ENCODE measurements at regions of chr10 and their contacts with region 1.

Region 1: DNA sequence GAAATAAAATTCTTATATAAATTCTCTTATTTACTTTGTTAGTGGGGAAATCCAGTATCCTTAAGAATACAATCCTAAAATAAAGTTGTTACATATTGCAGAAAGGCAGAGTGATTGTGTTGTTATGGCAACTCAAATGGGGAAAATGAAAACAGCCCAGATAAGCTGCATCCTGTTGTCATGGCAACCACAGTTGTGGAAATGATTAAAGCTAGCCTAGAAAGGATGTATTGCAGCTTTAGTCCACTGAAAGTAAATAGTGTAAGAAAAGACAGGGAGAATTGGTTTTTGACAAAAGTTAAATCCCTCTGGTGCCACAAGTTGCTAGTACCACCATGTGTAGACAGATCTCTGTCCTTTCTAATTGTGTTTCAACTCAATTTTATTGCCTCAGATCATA is 43.2 kb downstream of the BTRC start:
- DNase-seq: no peak
- H3K4me3 ChIP-seq: no peak overlapping the region
- H3K27ac ChIP-seq: no peak overlapping the region
- H3K4me1 ChIP-seq: no peaks in the 10 kb centered on the region
- H3K27me3 ChIP-seq: no peaks in the 10 kb centered on the region
- CTCF ChIP-seq: no peak

Region 2: DNA sequence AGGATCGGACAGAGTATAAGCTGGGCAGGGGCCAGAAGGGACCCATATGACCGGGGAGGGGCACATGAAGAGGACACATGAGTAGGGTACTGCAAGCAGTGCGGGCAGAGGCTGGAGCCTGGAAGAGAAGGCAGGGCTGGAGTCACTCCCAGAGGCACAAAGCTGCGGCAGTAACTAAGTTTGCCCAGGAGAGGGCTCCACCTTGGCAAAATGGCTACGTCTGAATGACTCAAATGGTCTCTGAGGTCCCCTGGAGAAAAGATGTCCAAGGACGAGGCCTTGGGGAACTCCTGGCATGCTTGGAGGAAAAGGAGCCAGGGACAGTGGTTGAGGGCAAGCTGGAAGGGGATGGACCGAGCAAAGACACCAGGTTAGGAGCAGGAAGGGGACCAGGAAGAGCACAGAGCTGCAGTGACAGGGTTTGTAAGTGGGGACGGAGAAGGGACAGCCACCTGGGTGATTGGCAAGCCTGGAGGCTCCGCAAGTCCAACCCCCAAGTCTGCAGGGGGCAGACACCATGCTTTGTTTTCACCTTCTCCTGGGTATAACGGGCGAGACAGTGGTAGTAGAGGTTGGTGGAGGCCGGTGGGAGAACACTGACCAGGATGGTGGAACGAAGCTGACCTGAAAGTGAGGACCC is 124.8 kb before region 1 on chr10:
- CTCF ChIA-PET with region 1: no interaction called
- POLR2A ChIA-PET with region 1: no interaction called
- intact Hi-C with region 1: no loop called
- DNase-seq: peak in 1 of 2 experiments; percentile 58
- H3K4me3 ChIP-seq: no peak overlapping the region
- H3K27ac ChIP-seq: no peak overlapping the region
- H3K4me1 ChIP-seq: no peaks in the 10 kb centered on the region
- H3K27me3 ChIP-seq: no peaks in the 10 kb centered on the region
- CTCF ChIP-seq: peak; percentile 68

Region 3: GRCh38 chr10:101380353-101381017 is 16.7 kb before region 1 on chr10:
- CTCF ChIA-PET with region 1: no interaction called
- POLR2A ChIA-PET with region 1: interaction called, 11 read pairs
- intact Hi-C with region 1: no loop called
- DNase-seq: peak in 1 of 2 experiments; percentile 84
- H3K4me3 ChIP-seq: no peak overlapping the region
- H3K27ac ChIP-seq: peak overlapping the region; percentile 68
- H3K4me1 ChIP-seq: peaks cover 13% of the 10 kb centered on the region
- H3K27me3 ChIP-seq: no peaks in the 10 kb centered on the region
- CTCF ChIP-seq: no peak